ENCODE measurements at regions of chr1 and their contacts with region 1.

Region 1: GRCh38 chr1:155794605-155795245 is 62.3 kb downstream of the GON4L start:
- DNase-seq: no peak
- H3K4me3 ChIP-seq: no peak overlapping the region
- H3K27ac ChIP-seq: no peak overlapping the region
- H3K4me1 ChIP-seq: no peaks in the 10 kb centered on the region
- H3K27me3 ChIP-seq: no peaks in the 10 kb centered on the region
- CTCF ChIP-seq: no peak
- POLR2A ChIP-seq: no peak

Region 2: GRCh38 chr1:155410931-155411330 is 383.8 kb before region 1 on chr1:
- intact Hi-C with region 1: loop called (anchors 5 kb)
- DNase-seq: no peak
- H3K4me3 ChIP-seq: no peak overlapping the region
- H3K27ac ChIP-seq: no peak overlapping the region
- H3K4me1 ChIP-seq: no peaks in the 10 kb centered on the region
- H3K27me3 ChIP-seq: no peaks in the 10 kb centered on the region
- CTCF ChIP-seq: no peak
- POLR2A ChIP-seq: no peak

Region 3: DNA sequence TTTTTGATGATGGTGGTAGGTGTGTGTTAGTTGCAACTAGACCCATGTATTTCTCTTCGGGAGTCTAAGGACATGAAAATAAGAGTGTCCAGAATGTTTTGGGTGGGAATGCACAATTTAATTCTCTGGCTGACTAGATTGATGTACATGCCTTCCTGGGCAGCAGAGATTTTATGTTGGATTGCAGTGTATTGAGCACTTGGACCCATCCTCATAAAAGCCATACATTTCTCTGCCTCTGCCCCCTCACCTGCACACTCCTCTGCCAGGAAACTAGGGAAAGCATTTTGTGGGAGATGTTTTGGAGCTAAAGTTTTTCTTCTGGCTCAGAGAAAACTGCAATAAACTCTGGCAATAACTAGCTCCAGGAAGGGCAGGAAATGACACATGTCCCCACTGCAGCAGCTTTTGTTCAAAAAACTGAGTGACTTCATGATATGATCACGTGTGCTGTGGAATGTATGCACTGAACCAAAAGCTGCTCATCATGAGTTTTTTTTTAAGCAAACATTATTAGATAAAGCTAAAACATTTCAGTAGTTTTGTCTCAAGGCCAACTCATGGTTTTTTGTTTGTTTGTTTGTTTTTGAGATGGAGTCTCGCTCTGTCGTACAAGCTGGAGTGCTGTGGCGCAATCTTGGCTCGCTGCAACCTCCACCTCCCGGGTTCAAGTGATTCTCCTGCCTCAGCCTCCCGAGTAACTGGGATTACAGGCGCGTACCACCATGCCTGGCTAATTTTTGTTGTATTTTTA is 98.8 kb after region 1 on chr1:
- intact Hi-C with region 1: no loop called
- DNase-seq: no peak
- H3K4me3 ChIP-seq: no peak overlapping the region
- H3K27ac ChIP-seq: peak overlapping the region; percentile 12 to 82 (median 69)
- H3K4me1 ChIP-seq: peaks cover 0 to 23% (median 16%) of the 10 kb centered on the region in 3 donors
- H3K27me3 ChIP-seq: no peaks in the 10 kb centered on the region
- CTCF ChIP-seq: no peak
- POLR2A ChIP-seq: no peak